Ovary (tissue), 10 donors: ENCODE measurements at regions of chr2 and their contacts with region 1.

Region 1: DNA sequence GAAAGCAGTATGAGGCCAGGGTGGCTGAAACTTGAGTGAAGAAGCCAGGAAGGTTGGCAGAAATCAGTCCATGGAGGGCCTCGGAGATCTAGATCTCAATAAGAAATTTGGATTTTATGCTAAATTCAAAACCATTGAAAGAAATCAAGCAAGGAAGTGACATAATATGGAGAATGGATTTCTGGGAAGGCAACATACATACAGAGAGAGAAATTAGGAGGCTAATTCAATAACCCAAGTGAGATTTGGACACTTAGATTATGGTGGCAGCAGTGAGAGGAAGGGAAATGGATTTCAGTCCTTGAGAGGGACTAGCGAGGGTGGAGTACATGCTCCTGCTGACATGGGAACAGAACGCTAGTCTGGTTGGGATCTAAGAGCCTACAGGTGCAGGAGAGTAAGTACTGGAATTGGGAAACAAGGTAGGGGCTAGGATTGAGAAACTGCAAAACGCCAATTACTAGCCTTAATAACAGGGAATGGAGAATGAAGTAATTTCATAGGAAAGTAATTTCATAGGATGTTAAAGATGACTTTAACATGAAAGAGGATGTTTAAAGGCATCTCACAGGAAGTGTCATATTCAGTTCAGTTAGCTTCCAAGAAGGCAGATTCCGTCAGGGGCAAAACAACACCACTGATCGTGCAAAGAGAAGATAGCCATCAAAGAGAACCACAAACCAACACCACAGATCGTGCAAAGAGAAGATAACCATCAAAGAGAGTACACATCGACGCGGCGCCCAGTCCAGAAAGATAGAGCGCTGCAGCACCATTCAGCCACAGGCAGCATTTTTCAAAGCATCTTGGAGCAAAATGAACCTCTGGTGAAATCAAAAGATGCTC is 27.2 kb downstream of the CDKL4 start:
- DNase-seq: no peak
- H3K4me3 ChIP-seq: no peak overlapping the region
- H3K27ac ChIP-seq: no peak overlapping the region
- H3K4me1 ChIP-seq: no peaks in the 10 kb centered on the region
- H3K27me3 ChIP-seq: no peaks in the 10 kb centered on the region
- CTCF ChIP-seq: no peak
- EP300 ChIP-seq: no peak
- POLR2A ChIP-seq: no peak

Region 2: DNA sequence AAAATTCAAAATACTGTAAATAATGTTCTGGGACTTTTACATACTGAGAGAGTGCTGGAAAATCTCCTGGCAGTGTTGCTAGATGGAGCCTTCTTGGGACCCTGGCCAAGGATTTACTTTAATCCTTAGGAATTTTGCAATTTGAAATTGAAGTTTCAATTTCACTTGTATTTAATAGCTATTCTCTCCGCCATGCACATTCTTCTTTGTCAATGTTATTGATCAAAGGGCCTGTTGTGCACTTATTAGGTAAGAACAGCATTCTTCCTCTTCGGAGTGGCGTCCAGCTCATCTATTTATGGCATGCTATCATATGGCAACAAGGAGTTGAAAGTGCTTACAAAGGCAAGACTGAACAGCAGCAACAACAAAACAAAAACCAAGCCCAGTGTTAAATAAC is 55.6 kb before region 1 on chr2:
- intact Hi-C with region 1: loop called in 1 of 4 experiments (anchors 10 kb)
- DNase-seq: no peak
- H3K4me3 ChIP-seq: no peak overlapping the region
- H3K27ac ChIP-seq: no peak overlapping the region
- H3K4me1 ChIP-seq: peaks cover 5% of the 10 kb centered on the region
- H3K27me3 ChIP-seq: no peaks in the 10 kb centered on the region
- CTCF ChIP-seq: no peak
- EP300 ChIP-seq: no peak
- POLR2A ChIP-seq: no peak